ENCODE measurements at regions of chr15 and their contacts with region 1.

Region 1: DNA sequence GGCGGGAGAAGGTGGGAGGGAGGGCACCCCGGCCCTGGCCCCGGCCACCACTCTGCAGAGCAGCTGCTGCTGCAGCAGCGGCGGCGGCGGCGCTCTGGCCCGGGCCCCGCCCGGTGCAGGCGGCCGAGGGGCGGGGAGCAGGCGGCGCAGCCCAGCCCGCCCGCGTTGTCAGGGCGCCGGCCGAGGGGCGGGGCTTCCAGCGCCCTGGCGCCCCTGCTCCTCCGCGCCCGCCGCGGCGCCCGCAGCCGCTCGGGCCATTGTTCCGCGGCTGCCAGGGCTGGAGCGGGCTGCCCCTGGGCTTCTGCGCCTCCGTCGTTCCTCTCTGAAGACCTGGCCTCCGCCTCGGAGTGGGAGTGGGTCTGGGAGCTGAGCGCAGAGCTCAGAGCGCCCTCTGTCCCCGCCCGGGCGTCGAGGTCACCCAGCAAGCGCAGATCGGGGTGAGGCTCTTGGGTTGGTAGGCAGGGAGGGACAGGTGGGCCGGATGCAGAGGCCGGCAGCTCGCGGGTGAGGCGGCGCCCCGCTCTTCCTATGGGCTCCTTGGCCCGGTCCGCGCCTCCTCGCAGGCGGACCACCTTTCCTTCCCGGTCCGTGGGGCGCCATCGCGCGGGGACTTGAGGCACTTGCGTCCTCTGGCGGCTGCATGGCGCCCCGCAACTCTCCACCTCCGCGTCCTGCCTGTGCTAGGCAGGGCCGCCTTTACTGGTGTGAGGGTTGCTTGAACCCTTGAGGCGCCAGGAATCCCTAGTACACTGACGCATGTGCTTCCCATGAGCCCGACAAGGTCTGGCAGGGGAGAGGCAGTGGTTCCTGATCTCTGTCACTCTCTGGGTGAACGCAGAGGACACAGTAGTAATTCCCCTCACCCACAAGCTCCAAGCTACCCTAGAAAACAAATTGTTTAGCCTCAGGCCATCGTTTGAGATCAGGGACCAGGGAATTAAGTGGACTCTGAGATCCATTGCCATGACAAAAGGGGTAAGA is at the start of gene LPCAT4:
- DNase-seq: peak; percentile 71 to 85
- H3K4me3 ChIP-seq: peak within 1 kb of the TSS; percentile 72
- H3K27ac ChIP-seq: peak within 1 kb of the TSS; percentile 73
- H3K4me1 ChIP-seq: peaks cover 32% of the 10 kb centered on the region
- H3K27me3 ChIP-seq: no peaks in the 10 kb centered on the region
- CTCF ChIP-seq: peak; percentile 84
- total RNA-seq, gene LPCAT4: 46.8 and 67.0 TPM in 2 replicates

Region 2: DNA sequence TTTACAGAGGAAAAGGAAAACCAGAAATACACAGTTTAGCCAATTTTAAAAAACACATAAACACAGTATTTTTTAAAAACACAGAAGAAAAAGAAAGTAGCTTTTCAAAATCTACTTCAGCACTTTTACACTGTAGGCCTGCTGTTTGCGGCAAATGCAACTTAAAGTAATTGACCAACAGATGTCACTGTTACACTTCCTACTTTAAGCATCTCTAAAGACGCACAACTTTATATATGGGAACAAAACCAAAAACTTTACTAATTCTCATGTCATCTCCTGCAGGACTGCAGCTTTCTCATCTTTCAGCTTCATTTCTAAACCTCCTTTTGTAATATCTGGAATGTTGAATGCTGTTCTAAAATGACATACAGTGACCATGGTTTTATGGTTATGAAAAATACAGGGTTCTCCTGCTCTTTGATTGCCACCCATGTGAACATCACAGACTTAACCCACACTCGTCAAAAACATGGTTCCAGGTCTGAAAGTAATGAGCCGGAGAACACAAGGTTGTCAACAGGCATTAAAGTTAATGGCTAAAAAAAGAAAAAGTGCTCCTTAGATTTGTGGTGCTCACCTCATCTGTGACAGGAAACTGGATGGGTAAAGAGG is 1280.8 kb before region 1 on chr15:
- CTCF ChIA-PET with region 1: no interaction called
- POLR2A ChIA-PET with region 1: no interaction called
- intact Hi-C with region 1: no loop called
- DNase-seq: peak in 1 of 2 experiments; percentile 51
- H3K4me3 ChIP-seq: no peak overlapping the region
- H3K27ac ChIP-seq: no peak overlapping the region
- H3K4me1 ChIP-seq: peaks cover 42% of the 10 kb centered on the region
- H3K27me3 ChIP-seq: no peaks in the 10 kb centered on the region
- CTCF ChIP-seq: peak; percentile 64

Region 3: DNA sequence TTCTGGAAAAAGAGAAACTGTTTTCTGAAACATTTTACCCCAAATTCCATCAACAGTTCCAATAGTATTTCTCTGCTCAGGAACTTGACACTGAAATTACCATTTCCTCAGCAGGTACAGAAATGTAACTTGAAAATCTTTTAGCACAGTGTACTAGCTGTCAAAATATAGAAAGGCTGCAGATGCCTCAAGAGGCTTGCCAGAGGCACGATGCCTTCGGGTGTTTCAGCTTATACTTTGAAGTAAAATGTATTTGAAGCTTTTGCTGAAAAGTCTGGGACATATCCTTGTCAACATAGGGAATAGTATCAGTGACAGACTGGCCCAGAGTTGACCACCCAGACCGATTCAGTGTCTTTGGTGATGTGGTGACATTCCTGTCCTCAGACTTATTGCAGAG is 553.5 kb before region 1 on chr15:
- CTCF ChIA-PET with region 1: no interaction called
- POLR2A ChIA-PET with region 1: no interaction called
- intact Hi-C with region 1: no loop called
- DNase-seq: no peak
- H3K4me3 ChIP-seq: no peak overlapping the region
- H3K27ac ChIP-seq: no peak overlapping the region
- H3K4me1 ChIP-seq: no peaks in the 10 kb centered on the region
- H3K27me3 ChIP-seq: no peaks in the 10 kb centered on the region
- CTCF ChIP-seq: no peak

Region 4: GRCh38 chr15:34101366-34102175 is 265.8 kb before region 1 on chr15 and contains the starts of genes EMC7 and PGBD4:
- CTCF ChIA-PET with region 1: interaction called, 3 read pairs
- POLR2A ChIA-PET with region 1: no interaction called
- intact Hi-C with region 1: loop called (anchors 2 kb)
- DNase-seq: peak; percentile 92 to 96
- H3K4me3 ChIP-seq: peak within 1 kb of the TSS; percentile 70
- H3K27ac ChIP-seq: peak within 1 kb of the TSS; percentile 65
- H3K4me1 ChIP-seq: peaks cover 19% of the 10 kb centered on the region
- H3K27me3 ChIP-seq: no peaks in the 10 kb centered on the region
- CTCF ChIP-seq: no peak
- total RNA-seq, gene EMC7: 33.9 and 34.3 TPM in 2 replicates
- total RNA-seq, gene PGBD4: 1.8 and 2.0 TPM in 2 replicates

Region 5: GRCh38 chr15:34109797-34110663 is 257.4 kb before region 1 on chr15:
- CTCF ChIA-PET with region 1: interaction called, 5 read pairs
- POLR2A ChIA-PET with region 1: no interaction called
- intact Hi-C with region 1: loop called (anchors 1 kb)
- DNase-seq: peak in 1 of 2 experiments; percentile 13
- H3K4me3 ChIP-seq: no peak overlapping the region
- H3K27ac ChIP-seq: no peak overlapping the region
- H3K4me1 ChIP-seq: no peaks in the 10 kb centered on the region
- H3K27me3 ChIP-seq: no peaks in the 10 kb centered on the region
- CTCF ChIP-seq: peak; percentile 76

Region 6: GRCh38 chr15:34223904-34224596 is 143.3 kb before region 1 on chr15:
- CTCF ChIA-PET with region 1: no interaction called
- POLR2A ChIA-PET with region 1: no interaction called
- intact Hi-C with region 1: loop called (anchors 10 kb)
- DNase-seq: peak in 1 of 2 experiments; percentile 1
- H3K4me3 ChIP-seq: peak overlapping the region; percentile 77
- H3K27ac ChIP-seq: peak overlapping the region; percentile 98
- H3K4me1 ChIP-seq: peaks cover 6% of the 10 kb centered on the region; the same call in 1 of the 2 replicates
- H3K27me3 ChIP-seq: no peaks in the 10 kb centered on the region
- CTCF ChIP-seq: no peak

Region 7: GRCh38 chr15:34318277-34319079 is 48.9 kb before region 1 on chr15:
- CTCF ChIA-PET with region 1: no interaction called
- POLR2A ChIA-PET with region 1: no interaction called
- intact Hi-C with region 1: loop called (anchors 1 kb)
- DNase-seq: peak; percentile 58 to 70
- H3K4me3 ChIP-seq: peak overlapping the region; percentile 63
- H3K27ac ChIP-seq: peak overlapping the region; percentile 38
- H3K4me1 ChIP-seq: 0 out of 2 replicates have a peak, but pooled peaks cover 20% of the 10 kb centered on the region
- H3K27me3 ChIP-seq: no peaks in the 10 kb centered on the region
- CTCF ChIP-seq: no peak

Region 8: DNA sequence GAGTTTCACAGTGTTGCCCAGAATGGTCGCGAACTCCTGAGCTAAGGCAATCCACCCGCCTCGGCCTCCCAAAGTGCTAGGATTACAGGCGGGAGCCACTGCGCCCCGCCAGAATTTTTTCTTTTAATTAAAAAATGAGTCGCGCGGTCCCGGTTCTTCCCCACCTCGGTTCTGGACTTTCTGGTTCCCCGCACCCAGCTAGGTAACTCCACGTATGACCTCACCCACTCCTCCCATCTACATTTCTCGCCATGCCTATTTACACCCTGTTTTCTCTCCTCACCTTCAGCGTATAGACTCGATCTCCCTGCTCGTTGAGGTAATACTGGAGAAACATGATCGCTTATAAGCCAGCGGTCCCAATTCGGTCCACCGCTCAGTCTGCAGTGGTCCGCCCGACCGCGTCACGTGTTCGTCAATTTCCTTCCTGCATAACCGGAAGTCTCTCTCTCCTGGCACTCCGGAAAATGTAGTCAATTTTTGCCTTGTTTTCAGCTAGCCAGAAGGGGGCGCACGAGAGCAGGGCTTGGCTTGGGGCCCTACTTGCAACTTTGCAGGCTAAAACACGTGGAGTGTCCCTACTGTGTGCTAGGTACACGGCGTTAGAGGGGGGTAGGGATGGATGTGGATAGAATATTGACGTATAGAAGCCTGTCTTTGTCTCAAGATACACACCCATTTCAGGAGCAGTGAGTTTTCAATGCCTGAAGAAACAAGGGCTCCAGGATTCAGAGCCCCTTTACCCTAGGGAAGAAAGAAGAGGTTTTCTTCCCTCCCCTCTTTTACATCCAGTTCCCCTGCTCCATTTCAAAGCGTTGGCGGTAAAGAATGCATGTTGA is 24.4 kb before region 1 on chr15 and contains the starts of genes NOP10 and NUTM1:
- CTCF ChIA-PET with region 1: no interaction called
- POLR2A ChIA-PET with region 1: no interaction called
- intact Hi-C with region 1: loop called (anchors 1 kb)
- DNase-seq: peak; percentile 79 to 86
- H3K4me3 ChIP-seq: peak within 1 kb of the TSS; percentile 83
- H3K27ac ChIP-seq: peak within 1 kb of the TSS; percentile 81
- H3K4me1 ChIP-seq: peaks cover 11% of the 10 kb centered on the region; the same call in 1 of the 2 replicates
- H3K27me3 ChIP-seq: no peaks in the 10 kb centered on the region
- CTCF ChIP-seq: peak; percentile 93
- total RNA-seq, gene NOP10: 109 and 162 TPM in 2 replicates
- total RNA-seq, gene NUTM1: not detected in 2 replicates